ENCODE measurements at regions of chr11 and their contacts with region 1.

Region 1: DNA sequence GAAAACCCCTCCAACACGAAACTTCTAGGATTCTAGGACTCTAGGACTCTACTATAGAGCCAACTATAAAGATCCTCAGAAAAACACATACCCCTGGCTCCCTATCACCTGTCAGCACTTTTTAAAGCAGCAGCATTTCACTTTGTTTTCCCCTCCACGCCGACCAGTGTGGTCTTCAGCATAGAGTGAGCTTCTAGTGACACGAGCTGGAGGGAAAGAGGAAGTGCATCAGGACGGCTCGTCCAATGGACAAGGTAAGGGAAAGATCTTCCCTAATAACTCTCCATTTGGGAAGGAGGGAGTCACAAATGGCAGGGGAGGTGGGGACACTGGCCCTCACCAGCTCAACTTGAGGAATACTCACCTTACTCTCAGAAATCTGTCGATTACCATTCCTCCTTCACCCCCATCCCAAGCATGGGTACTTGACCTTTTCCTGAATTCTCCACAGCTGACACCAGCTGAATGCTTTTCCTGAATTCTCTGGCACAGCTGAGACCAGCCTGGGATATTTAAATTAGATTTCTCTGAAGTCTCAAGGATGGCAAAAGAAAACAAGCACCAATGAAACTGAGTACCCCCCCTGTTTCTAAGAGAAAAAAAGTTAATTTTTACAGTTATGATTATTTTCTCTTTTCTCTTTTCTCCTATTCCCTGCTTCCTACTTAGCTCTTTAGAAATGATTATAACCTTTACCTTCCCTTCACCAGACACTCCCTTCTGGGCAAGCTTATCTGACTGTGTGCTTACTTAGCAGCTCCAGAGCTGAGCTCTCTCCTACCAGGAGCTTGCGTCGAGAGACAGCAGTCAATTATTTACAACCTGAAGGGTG is 33.3 kb upstream of the NNMT start:
- DNase-seq: peak; percentile 24
- H3K4me3 Mint-ChIP-seq: no peak overlapping the region
- H3K27ac Mint-ChIP-seq: no peak overlapping the region
- H3K4me1 Mint-ChIP-seq: no peaks in the 10 kb centered on the region
- H3K27me3 Mint-ChIP-seq: peaks cover 1% of the 10 kb centered on the region

Region 2: GRCh38 chr11:113896156-113896879 is 366.6 kb before region 1 on chr11:
- CTCF ChIA-PET with region 1: interaction called, 118 read pairs
- POLR2A ChIA-PET with region 1: no interaction called
- DNase-seq: peak; percentile 48
- H3K4me3 Mint-ChIP-seq: no peak overlapping the region
- H3K27ac Mint-ChIP-seq: no peak overlapping the region
- H3K4me1 Mint-ChIP-seq: peaks cover 6% of the 10 kb centered on the region
- H3K27me3 Mint-ChIP-seq: peaks cover 3% of the 10 kb centered on the region

Region 3: GRCh38 chr11:114015119-114015518 is 247.8 kb before region 1 on chr11:
- CTCF ChIA-PET with region 1: interaction called, 14 read pairs
- POLR2A ChIA-PET with region 1: no interaction called
- DNase-seq: no peak
- H3K4me3 Mint-ChIP-seq: no peak overlapping the region
- H3K27ac Mint-ChIP-seq: no peak overlapping the region
- H3K4me1 Mint-ChIP-seq: no peaks in the 10 kb centered on the region
- H3K27me3 Mint-ChIP-seq: peaks cover 11% of the 10 kb centered on the region

Region 4: DNA sequence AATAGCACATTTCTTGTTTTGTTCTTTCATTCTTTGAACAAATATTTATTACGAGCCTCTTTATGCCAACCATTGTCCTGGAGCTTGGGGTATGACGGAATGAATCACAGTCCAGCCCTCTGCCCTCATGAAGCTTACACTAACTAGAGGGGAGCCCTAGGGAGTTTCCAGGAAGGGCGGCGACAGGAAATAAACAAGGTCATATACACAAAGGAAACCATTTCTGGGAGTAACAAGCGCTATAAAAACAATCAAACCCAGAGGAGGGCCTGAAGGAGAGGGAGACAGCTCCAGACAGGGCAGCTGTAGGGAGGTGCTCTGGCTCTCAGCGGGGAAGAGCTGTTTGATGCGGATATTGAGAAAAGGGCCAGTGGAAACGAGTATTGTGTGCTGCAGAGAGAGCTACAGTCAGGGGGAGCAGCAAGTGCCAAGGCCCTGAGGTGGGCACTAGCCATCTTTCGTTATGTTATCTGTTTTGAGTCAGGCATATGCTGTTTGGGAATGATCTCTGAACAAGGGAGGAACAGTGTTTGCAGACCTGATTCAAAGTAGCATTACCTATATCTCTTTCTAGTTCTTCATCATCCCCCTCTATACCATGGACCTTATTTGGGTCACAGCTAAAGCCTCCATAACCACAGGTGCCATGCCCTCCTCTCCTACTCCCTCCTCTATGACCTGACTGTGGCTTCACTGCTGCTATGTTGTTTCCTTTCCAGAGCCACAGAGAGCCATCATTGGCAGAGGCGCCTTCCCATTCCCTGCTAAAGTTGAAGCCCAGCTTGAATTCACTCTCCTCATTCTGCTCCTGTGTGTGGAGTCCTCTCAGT is 218.6 kb before region 1 on chr11:
- CTCF ChIA-PET with region 1: interaction called, 148 read pairs
- POLR2A ChIA-PET with region 1: no interaction called
- DNase-seq: no peak
- H3K4me3 Mint-ChIP-seq: no peak overlapping the region
- H3K27ac Mint-ChIP-seq: peak overlapping the region; percentile 52
- H3K4me1 Mint-ChIP-seq: peaks cover 22% of the 10 kb centered on the region
- H3K27me3 Mint-ChIP-seq: peaks cover 17% of the 10 kb centered on the region

Region 5: DNA sequence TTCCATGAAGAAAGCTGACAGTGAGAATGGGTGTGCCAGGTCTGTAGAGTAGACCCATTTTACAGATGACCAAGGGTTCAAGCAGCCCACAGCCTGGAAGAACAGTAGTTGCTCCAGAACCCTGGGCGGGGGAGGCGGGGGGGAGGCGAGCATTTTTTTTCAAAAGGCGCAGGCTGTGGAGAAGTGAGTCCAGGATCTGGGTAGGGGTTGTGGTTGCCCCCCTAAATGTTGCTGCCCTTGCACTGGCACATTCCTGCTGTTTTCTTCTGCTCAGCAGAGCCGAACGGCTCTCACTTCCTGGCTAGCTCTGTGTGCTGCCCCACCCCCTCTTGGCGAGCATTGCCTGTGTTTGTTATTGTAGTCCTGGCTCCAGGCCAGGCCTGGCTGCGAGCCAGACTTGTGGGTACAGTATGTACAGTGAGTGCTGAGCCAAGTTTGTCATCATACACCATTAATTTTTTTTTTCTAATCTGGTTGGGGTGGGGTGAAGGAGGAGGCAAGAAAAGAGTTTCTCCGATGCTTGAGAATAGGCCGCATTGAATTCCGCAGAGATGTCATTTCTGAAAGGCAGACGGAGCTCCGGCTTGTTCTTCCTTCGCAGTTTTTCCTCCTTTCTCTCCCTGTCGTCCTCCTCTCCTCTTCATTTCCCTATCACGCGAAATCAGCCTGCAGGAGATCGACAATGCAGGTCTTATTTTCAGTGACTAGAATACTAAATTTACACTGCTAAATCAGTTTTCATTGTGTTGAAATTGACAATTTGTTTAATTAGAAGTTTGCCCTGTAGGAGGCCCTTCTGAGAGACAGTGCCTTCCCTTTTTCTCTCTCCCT is 102.9 kb before region 1 on chr11:
- CTCF ChIA-PET with region 1: interaction called, 23 read pairs
- POLR2A ChIA-PET with region 1: interaction called, 6 read pairs
- DNase-seq: peak; percentile 97
- H3K4me3 Mint-ChIP-seq: peak overlapping the region; percentile 49
- H3K27ac Mint-ChIP-seq: peak overlapping the region; percentile 75
- H3K4me1 Mint-ChIP-seq: peaks cover 49% of the 10 kb centered on the region
- H3K27me3 Mint-ChIP-seq: peaks cover 3% of the 10 kb centered on the region

Region 6: DNA sequence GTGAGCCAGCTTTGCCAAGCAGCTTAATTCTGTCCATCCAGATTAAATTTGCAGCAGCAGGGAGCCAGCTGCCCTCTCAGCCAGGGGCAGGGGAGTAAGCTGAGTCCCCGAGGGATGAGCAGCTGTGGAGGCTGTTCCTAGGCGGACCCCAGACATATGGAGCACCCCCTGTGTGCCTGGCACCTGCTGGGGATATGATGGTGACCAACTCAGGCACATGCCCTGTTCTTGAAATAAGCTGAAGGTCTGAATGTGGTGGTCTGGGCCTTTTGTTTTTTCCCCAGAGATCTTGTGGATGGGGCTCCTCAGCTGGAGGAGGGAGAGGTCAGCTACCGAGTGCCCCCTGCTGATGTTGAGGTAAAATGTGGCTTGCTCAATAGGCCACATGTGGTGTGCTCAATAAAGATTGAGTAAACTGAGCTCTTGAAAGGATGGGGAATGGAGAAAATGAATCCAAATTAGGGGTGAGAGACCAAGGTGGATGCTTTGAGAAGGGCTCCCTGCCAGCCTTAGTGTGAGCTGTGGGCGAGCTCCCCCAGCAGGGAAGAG is 70.0 kb before region 1 on chr11:
- CTCF ChIA-PET with region 1: interaction called, 10 read pairs
- POLR2A ChIA-PET with region 1: no interaction called
- DNase-seq: no peak
- H3K4me3 Mint-ChIP-seq: no peak overlapping the region
- H3K27ac Mint-ChIP-seq: no peak overlapping the region
- H3K4me1 Mint-ChIP-seq: peaks cover 16% of the 10 kb centered on the region
- H3K27me3 Mint-ChIP-seq: no peaks in the 10 kb centered on the region

Region 7: GRCh38 chr11:114433376-114433775 is 170.5 kb after region 1 on chr11:
- CTCF ChIA-PET with region 1: no interaction called
- POLR2A ChIA-PET with region 1: no interaction called
- DNase-seq: no peak
- H3K4me3 Mint-ChIP-seq: no peak overlapping the region
- H3K27ac Mint-ChIP-seq: no peak overlapping the region
- H3K4me1 Mint-ChIP-seq: peaks cover 10% of the 10 kb centered on the region
- H3K27me3 Mint-ChIP-seq: no peaks in the 10 kb centered on the region

Measured in activated CD4-positive, alpha-beta memory T cell treated with anti-CD3 and anti-CD28 coated beads, Interleukin-2, amount 10 ng/mL, durations not matched to agents 7 days and 5 days (primary cell).